ENCODE measurements at regions of chr2 and their contacts with region 1.

Region 1: GRCh38 chr2:24792874-24793760 is at the starts of genes CENPO and PTRHD1:
- DNase-seq: peak; percentile 91 to 97 (median 93)
- ATAC-seq: peak; percentile 96
- H3K4me3 ChIP-seq: peak within 1 kb of the TSS; percentile 88
- H3K4me3 Mint-ChIP-seq: peak within 1 kb of the TSS; percentile 97
- H3K27ac ChIP-seq: peak within 1 kb of the TSS; percentile 95 to 97
- H3K27ac Mint-ChIP-seq: peak within 1 kb of the TSS; percentile 99
- H3K4me1 ChIP-seq: peaks cover 13% of the 10 kb centered on the region
- H3K4me1 Mint-ChIP-seq: peaks cover 21% of the 10 kb centered on the region
- H3K27me3 ChIP-seq: no peaks in the 10 kb centered on the region
- H3K27me3 Mint-ChIP-seq: no peaks in the 10 kb centered on the region
- CTCF ChIP-seq: peak; percentile 60
- total RNA-seq, gene CENPO: 3.4 to 3.5 TPM
- total RNA-seq, gene PTRHD1: 15.3 to 15.7 TPM

Region 2: DNA sequence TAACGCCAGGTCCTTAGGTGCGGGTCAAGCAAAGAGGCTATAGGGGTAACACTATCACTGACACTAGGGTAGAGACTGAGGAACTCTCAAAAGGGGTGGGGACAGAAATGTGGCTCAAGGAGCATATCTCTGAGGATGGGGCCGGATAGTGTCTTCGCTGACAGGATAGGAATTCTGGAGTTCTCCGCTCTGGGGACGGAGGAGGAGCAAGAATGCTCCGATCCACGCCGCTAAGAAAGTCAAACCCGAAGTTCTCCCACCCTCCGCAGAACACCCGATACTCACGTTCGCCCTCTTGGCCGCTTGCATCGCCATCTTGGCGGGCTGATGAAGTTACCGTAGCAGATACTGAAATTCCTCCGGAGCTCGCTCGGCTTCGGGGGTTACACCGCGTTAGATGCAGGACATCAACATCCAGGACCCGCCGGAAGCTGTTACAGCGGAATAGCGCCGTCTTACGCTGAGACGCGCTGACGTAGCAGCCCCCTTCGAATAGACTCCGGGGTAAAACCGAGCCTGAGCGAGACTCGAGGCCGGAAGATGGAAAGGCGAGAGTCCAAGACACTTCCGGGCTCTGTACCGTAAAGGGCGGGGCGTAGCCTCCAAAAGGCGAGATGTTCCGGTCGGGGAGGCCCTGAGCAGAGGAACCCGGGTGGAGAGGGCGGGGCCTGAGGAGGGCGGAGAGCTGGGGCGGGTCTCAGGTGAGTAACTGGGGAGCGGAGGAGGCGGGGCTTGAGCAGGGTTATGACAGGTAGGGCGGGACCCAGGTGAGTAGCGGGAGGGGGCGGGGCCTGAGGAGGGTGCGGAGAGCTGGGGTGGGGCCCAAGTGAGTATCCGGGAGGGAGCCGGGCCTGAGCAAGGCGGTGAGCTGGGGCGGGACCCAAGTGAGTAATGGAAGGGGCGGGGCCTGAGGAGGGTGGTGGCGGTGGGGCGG is 716.9 kb before region 1 on chr2 and contains the start of gene SF3B6:
- CTCF ChIA-PET with region 1: no interaction called
- POLR2A ChIA-PET with region 1: interaction called, 8 read pairs
- intact Hi-C with region 1: loop called in 1 of 2 experiments (anchors 5 kb)
- DNase-seq: peak; percentile 98 to 100 (median 100)
- ATAC-seq: peak; percentile 81
- H3K4me3 ChIP-seq: peak within 1 kb of the TSS; percentile 93
- H3K4me3 Mint-ChIP-seq: peak within 1 kb of the TSS; percentile 97
- H3K27ac ChIP-seq: peak within 1 kb of the TSS; percentile 86 to 95
- H3K27ac Mint-ChIP-seq: peak within 1 kb of the TSS; percentile 98
- H3K4me1 ChIP-seq: peaks cover 27% of the 10 kb centered on the region
- H3K4me1 Mint-ChIP-seq: peaks cover 41% of the 10 kb centered on the region
- H3K27me3 ChIP-seq: no peaks in the 10 kb centered on the region
- H3K27me3 Mint-ChIP-seq: no peaks in the 10 kb centered on the region
- CTCF ChIP-seq: no peak
- total RNA-seq, gene SF3B6: 59.8 to 62.6 TPM

Region 3: DNA sequence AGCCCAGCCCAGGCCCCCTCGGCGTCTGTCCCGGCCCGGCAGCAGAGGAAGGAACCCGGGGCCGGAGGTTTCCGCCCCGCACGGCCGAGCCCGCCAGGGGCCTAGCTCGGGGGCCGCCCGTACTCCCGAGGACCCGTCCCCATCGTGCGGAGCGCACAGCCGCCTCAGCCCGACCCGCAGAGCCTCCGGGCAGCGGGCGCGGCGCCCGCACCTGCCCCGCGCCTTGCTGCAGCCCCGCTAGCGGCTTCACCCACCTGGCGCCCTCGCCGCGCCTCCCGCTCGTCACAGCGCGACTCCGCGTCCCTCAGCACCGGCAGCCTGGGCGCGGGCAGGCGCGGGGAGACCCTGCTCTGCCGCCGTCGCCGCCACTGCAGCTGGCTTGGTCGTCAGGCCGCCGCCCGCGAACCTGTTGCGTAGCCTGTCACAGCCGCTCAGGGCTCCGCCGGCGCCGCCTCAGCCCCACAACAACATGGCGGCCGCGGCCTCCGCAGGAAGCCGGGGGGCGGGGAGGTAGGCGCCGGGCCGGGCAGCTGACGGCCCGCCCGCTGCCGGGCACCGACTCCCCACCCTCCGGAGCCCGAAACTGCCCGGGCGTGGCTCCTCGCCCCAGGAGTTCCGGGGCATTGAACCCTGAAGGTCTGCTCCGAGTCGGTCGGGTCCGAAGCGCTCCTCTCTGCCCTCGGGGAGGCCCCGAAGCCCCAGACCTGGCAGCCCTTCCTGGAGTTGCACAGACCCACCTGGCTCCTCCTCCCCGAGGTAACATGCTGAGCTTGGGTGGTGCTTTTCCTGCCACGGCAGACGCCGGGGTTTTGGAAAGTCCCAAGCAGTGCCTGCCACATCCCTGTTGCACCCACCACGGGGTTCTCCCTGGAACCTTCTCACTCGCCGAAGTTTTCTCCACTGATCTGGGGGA is 432.8 kb before region 1 on chr2 and contains the start of gene ITSN2:
- CTCF ChIA-PET with region 1: no interaction called
- POLR2A ChIA-PET with region 1: interaction called, 17 read pairs
- intact Hi-C with region 1: loop called in 1 of 2 experiments (anchors 5 kb)
- DNase-seq: peak; percentile 65 to 94 (median 75)
- ATAC-seq: peak; percentile 81
- H3K4me3 ChIP-seq: peak within 1 kb of the TSS; percentile 83
- H3K4me3 Mint-ChIP-seq: peak within 1 kb of the TSS; percentile 99
- H3K27ac ChIP-seq: peak within 1 kb of the TSS; percentile 83 to 93
- H3K27ac Mint-ChIP-seq: peak within 1 kb of the TSS; percentile 97
- H3K4me1 ChIP-seq: peaks cover 13% of the 10 kb centered on the region
- H3K4me1 Mint-ChIP-seq: peaks cover 40% of the 10 kb centered on the region
- H3K27me3 ChIP-seq: no peaks in the 10 kb centered on the region
- H3K27me3 Mint-ChIP-seq: no peaks in the 10 kb centered on the region
- CTCF ChIP-seq: no peak
- total RNA-seq, gene ITSN2: 75.4 to 77.1 TPM

Region 4: DNA sequence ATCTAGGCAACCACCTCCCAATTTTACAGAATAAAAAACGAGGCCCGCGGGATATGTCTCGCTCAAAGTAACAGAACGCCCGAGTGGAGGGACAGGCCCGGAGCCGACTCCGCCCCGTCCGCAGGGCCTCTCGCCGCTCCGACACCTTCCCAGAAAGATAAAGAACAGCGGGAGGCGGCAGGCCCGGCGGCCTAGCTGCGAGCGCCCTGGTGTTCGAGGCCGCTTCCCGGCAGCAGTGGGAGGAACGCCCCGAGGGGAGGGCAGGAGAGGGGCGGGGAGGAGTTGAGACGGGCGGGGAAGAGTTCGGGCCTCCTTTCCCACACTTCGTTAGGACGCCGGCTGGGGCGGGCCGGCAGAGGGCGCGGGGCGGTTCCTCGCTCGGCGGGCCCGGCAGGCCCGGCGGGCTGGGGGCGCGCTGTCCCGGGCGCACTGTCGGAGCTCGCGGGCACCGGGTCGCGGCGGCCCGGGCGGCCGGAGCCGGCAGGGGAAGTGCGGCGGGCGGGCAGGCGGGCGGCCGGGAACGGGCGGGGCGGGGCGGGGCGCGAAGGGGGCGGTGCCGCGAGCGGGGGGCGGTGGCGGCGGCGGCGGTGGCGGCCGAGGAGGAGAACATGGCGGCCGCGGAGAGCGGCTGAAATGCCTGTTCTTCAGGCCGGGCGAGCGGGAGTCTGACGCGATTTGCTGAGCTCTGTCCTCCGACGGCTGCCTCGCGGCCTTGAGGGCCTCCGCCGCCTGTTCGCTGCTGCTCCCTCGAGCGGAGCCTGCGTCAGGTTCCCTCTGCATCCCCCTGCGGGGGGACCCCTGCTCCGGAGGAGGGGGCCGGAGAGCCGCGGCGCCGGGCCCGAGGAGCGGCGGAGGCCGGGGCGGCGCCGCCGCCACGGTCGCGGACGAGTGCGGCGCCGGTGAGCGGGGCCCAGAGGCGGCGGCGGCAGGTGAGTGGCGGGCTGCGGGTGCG is 302.2 kb before region 1 on chr2 and contains the start of gene NCOA1:
- CTCF ChIA-PET with region 1: no interaction called
- POLR2A ChIA-PET with region 1: interaction called, 10 read pairs
- intact Hi-C with region 1: loop called (anchors 2 to 10 kb)
- DNase-seq: peak; percentile 83 to 95 (median 88)
- ATAC-seq: peak; percentile 85
- H3K4me3 ChIP-seq: peak within 1 kb of the TSS; percentile 60
- H3K4me3 Mint-ChIP-seq: peak within 1 kb of the TSS; percentile 92
- H3K27ac ChIP-seq: peak within 1 kb of the TSS; percentile 76 to 81
- H3K27ac Mint-ChIP-seq: peak within 1 kb of the TSS; percentile 94
- H3K4me1 ChIP-seq: peaks cover 34% of the 10 kb centered on the region
- H3K4me1 Mint-ChIP-seq: peaks cover 66% of the 10 kb centered on the region
- H3K27me3 ChIP-seq: no peaks in the 10 kb centered on the region
- H3K27me3 Mint-ChIP-seq: no peaks in the 10 kb centered on the region
- CTCF ChIP-seq: no peak
- total RNA-seq, gene NCOA1: 35.5 to 40.6 TPM

Region 5: DNA sequence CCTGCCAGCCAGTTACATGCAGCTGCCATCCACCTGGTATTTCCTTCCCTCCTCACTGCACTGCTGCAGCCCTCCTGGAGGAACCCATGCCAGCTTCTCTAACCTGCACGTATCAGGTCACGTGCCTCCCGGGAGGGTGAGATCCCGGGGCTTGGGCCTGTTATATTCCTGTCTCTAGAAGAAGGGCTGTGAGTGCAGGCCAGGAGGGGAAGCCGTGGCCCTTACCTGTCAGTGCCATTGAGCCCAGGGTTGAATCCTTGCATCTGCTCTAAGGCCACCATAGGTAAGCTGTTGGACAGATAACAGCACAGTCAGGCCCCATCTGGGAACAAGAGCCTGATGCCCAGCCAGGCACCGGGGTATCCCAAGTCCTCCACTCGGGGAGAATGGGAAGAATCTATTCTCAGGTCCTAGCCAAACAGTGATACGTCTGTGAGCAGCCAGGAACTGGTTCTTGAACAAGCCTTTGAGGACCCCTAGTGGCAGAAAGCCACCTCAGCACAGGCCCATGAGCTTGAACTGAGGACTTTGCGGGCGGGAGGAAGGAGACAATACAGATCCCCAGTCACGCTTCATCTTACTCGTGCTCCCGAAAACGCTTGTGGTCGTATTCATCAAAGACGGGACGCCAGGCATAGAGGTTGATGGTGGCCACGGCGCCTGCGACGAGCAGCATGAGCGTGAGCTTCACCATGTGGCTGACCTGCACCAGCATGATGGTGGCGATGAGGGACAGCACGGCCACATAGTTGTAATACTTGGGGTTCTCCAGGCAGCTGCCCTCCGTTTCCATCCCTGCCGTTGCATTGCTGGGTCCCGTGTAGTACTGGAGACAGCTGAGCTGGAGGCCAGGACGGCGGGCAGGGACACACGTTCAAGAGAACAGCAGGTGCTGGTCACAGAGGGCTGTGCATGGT is 34.5 kb after region 1 on chr2:
- CTCF ChIA-PET with region 1: interaction called, 8 read pairs
- POLR2A ChIA-PET with region 1: interaction called, 6 read pairs
- intact Hi-C with region 1: loop called in 1 of 2 experiments (anchors 2 kb)
- DNase-seq: peak; percentile 57 to 86 (median 62)
- ATAC-seq: peak; percentile 93
- H3K4me3 ChIP-seq: no peak overlapping the region
- H3K4me3 Mint-ChIP-seq: no peak overlapping the region
- H3K27ac ChIP-seq: no peak overlapping the region
- H3K27ac Mint-ChIP-seq: no peak overlapping the region
- H3K4me1 ChIP-seq: peaks cover 15% of the 10 kb centered on the region
- H3K4me1 Mint-ChIP-seq: peaks cover 22% of the 10 kb centered on the region
- H3K27me3 ChIP-seq: no peaks in the 10 kb centered on the region
- H3K27me3 Mint-ChIP-seq: no peaks in the 10 kb centered on the region
- CTCF ChIP-seq: peak; percentile 80

Region 6: DNA sequence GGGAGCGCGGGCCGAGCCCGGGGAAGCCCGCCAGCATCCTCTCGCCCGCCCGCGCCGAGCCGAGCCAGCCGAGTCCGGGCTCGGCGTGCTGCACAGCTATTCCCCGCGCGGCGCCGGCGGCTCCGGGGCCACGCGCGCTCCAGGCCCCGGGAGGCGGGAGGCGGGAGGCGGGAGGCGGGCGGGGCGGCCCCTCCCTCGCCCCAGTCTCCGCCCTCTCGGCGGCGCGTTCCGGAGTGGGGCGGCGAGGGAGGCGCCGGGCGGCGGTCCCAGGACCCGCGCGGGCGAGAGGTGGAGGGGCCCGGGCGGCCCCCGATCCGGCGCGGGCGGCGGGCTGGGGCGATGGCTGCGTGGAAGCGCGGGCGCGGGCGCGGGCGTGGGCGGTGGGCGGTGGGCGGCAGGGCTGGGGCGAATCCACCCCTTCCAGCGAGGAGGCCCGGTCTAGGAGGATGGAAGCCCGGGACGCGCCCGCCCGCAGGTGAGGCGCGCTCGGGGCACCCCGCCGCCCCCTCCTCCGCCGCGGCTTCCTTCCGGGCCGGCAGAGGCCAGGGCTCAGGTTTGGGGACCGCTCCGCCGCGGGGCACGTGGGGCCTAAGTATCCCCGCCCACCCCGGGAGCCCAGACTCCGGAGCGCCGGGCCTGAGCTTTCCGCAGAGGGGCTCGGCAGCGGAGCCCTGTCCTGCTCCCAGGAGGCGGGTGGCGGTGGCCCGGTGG is 127.1 kb after region 1 on chr2 and contains the start of gene ADCY3:
- CTCF ChIA-PET with region 1: no interaction called
- POLR2A ChIA-PET with region 1: interaction called, 3 read pairs
- intact Hi-C with region 1: loop called in 1 of 2 experiments (anchors 5 kb)
- DNase-seq: peak; percentile 26 to 85 (median 52)
- ATAC-seq: peak; percentile 62
- H3K4me3 ChIP-seq: peak within 1 kb of the TSS; percentile 60
- H3K4me3 Mint-ChIP-seq: peak within 1 kb of the TSS; percentile 97
- H3K27ac ChIP-seq: peak within 1 kb of the TSS in 1 of 2 donors; percentile 40
- H3K27ac Mint-ChIP-seq: peak within 1 kb of the TSS; percentile 69
- H3K4me1 ChIP-seq: peaks cover 37% of the 10 kb centered on the region
- H3K4me1 Mint-ChIP-seq: peaks cover 34% of the 10 kb centered on the region
- H3K27me3 ChIP-seq: no peaks in the 10 kb centered on the region
- H3K27me3 Mint-ChIP-seq: no peaks in the 10 kb centered on the region
- CTCF ChIP-seq: no peak
- total RNA-seq, gene ADCY3: 28.1 to 31.4 TPM

Region 7: DNA sequence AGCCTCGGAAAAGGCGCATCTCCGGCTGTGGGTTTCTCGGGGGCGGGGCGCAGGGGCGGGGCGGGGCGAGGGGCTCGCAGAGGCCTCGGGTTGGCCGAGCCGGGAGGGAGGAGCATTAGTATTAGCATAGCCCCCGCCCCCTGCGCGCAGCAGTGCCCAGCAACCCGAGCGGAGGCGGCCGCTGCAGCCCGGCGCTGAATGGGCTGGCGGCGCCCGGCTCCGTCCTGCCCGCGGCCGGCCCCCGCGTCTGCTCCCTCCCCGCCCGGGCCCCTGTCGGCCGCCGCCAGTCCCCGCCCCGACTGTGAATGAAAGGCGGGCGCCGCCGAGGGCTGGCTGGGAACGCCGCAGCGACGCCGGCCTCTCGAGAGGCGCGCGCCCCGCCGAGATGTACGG is 248.8 kb after region 1 on chr2 and contains the start of gene EFR3B:
- CTCF ChIA-PET with region 1: no interaction called
- POLR2A ChIA-PET with region 1: no interaction called
- intact Hi-C with region 1: loop called in 1 of 2 experiments (anchors 2 kb)
- DNase-seq: peak; percentile 74 to 95 (median 86)
- ATAC-seq: peak; percentile 91
- H3K4me3 ChIP-seq: peak within 1 kb of the TSS; percentile 58
- H3K4me3 Mint-ChIP-seq: peak within 1 kb of the TSS; percentile 90
- H3K27ac ChIP-seq: no peak within 1 kb of the TSS
- H3K27ac Mint-ChIP-seq: no peak within 1 kb of the TSS
- H3K4me1 ChIP-seq: peaks cover 22% of the 10 kb centered on the region
- H3K4me1 Mint-ChIP-seq: peaks cover 24% of the 10 kb centered on the region
- H3K27me3 ChIP-seq: peaks cover 38 to 39% of the 10 kb centered on the region in 2 experiments
- H3K27me3 Mint-ChIP-seq: peaks cover 40% of the 10 kb centered on the region
- CTCF ChIP-seq: no peak
- total RNA-seq, gene EFR3B: 0.11 TPM in 1 of 2 experiments, not detected in the other

Measured in CD4-positive, alpha-beta T cell (primary cell).